Ovary (tissue), 10 donors: ENCODE measurements at regions of chr13 and their contacts with region 1.

Region 1: GRCh38 chr13:31349165-31349564 is 149.4 kb downstream of the B3GLCT start:
- DNase-seq: no peak
- H3K4me3 ChIP-seq: no peak overlapping the region
- H3K27ac ChIP-seq: no peak overlapping the region
- H3K4me1 ChIP-seq: no peaks in the 10 kb centered on the region
- H3K27me3 ChIP-seq: no peaks in the 10 kb centered on the region
- CTCF ChIP-seq: no peak
- EP300 ChIP-seq: no peak
- POLR2A ChIP-seq: no peak

Region 2: GRCh38 chr13:31903111-31903815 is 554.1 kb after region 1 on chr13:
- intact Hi-C with region 1: loop called in 1 of 4 experiments (anchors 5 kb)
- DNase-seq: no peak
- H3K4me3 ChIP-seq: no peak overlapping the region
- H3K27ac ChIP-seq: no peak overlapping the region
- H3K4me1 ChIP-seq: peaks cover 6% of the 10 kb centered on the region
- H3K27me3 ChIP-seq: no peaks in the 10 kb centered on the region
- CTCF ChIP-seq: no peak
- EP300 ChIP-seq: no peak
- POLR2A ChIP-seq: no peak